ENCODE measurements at regions of chr2 and their contacts with region 1.

Region 1: DNA sequence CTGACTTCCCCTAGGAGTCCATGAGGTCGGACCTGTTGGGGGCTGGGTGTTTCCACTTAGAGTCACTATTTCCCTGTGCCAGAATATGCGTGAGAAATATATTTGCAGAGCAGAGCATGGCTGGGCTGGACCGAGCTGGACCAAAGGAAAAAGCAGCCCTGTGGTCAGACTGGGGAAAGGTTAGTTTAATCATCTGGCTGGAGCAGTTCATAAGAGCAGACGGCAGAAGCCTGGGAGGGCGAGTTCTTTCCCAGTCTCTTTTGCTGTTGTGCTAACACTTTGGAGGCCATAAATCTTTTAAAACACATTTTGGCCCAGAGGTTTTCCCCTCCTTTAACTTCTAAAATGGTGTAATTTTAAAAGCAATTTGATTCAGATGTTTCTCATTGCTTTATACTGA is 66.5 kb downstream of the GLI2 start:
- DNase-seq: peak; percentile 88

Region 2: DNA sequence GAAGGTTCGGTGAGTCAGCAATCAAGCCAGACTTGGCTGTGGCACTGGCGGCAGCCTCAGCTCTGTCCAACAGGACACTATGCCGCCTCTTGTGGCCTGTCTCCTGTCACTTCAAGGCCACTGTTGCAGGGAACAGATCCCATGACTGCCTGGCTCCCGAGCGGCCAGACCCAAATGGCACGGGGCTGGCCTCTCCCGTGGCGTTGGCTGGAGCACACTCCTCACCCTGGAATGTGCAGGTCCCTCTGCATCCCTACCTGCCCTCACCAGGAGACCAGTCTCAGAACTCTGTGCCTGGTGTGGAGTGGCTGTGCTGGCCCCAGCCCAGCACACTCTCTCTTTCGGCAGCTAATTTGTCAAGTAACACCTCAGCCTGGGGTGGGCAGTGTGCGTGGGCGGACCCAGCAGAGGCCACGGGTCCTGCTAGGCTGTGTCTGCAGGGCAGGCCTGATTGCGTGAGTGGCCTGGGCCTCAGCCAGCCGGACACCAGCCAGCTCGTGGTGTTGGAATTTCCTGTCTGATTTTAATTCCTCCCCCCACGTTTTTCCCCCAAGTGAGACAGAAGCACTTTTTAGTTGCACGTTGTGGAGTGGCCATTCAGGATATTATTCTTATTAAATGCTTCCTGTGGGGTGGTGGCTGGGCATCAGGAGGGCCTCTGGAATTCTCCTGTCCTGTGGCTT is 112.8 kb after region 1 on chr2:
- intact Hi-C with region 1: loop called in 1 of 2 experiments (anchors 10 kb)
- DNase-seq: peak; percentile 94